ENCODE measurements at regions of chr3 and their contacts with region 1.

Region 1: GRCh38 chr3:39126532-39127071 is 19.1 kb downstream of the TTC21A start:
- DNase-seq: peak in 1 of 2 experiments; percentile 72
- ATAC-seq: peak; percentile 73 to 88
- H3K4me3 ChIP-seq: no peak overlapping the region
- H3K27ac ChIP-seq: peak overlapping the region in 1 of 2 experiments; percentile 27; a peak in 1 of 6 replicates
- H3K4me1 ChIP-seq: peaks cover 18% of the 10 kb centered on the region
- CTCF ChIP-seq: peak; percentile 64
- EP300 ChIP-seq: no peak
- POLR2A ChIP-seq: no peak
- RAD21 ChIP-seq: peak; percentile 78 to 92

Region 2: GRCh38 chr3:39166134-39166731 is 39.6 kb after region 1 on chr3:
- CTCF ChIA-PET with region 1: interaction called, 29 read pairs
- POLR2A ChIA-PET with region 1: no interaction called
- DNase-seq: peak in 1 of 2 experiments; percentile 55
- ATAC-seq: peak; percentile 75 to 85; a peak in 5 of 6 replicates
- H3K4me3 ChIP-seq: no peak overlapping the region
- H3K27ac ChIP-seq: peak overlapping the region; percentile 14 to 32; a peak in 4 of 6 replicates
- H3K4me1 ChIP-seq: peaks cover 25% of the 10 kb centered on the region; the same call in 2 of the 3 replicates
- CTCF ChIP-seq: no peak
- EP300 ChIP-seq: no peak
- POLR2A ChIP-seq: no peak
- RAD21 ChIP-seq: no peak

Region 3: DNA sequence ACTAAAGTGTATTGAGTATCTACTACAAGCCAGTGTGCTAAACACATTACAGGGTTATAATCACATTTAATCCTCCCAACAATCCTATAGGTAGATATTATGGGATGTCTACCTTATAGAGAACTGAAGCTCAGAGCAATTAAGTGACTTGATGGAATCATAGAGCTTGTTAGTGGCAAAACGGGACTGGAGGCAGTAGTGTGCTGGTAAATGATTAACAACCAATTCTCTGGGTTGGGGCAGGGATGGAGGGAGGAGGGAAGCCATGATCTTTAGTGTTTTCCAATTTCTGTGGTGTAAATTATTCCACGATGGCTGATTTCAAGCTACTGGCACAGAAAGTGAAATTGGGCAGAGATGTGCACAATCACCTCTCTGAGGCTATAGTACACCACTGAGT is 45.3 kb after region 1 on chr3:
- CTCF ChIA-PET with region 1: interaction called, 32 read pairs
- POLR2A ChIA-PET with region 1: no interaction called
- DNase-seq: no peak
- ATAC-seq: no peak
- H3K4me3 ChIP-seq: no peak overlapping the region
- H3K27ac ChIP-seq: no peak overlapping the region
- H3K4me1 ChIP-seq: peaks cover 14% of the 10 kb centered on the region
- CTCF ChIP-seq: no peak
- EP300 ChIP-seq: no peak
- POLR2A ChIP-seq: no peak
- RAD21 ChIP-seq: no peak

Region 4: DNA sequence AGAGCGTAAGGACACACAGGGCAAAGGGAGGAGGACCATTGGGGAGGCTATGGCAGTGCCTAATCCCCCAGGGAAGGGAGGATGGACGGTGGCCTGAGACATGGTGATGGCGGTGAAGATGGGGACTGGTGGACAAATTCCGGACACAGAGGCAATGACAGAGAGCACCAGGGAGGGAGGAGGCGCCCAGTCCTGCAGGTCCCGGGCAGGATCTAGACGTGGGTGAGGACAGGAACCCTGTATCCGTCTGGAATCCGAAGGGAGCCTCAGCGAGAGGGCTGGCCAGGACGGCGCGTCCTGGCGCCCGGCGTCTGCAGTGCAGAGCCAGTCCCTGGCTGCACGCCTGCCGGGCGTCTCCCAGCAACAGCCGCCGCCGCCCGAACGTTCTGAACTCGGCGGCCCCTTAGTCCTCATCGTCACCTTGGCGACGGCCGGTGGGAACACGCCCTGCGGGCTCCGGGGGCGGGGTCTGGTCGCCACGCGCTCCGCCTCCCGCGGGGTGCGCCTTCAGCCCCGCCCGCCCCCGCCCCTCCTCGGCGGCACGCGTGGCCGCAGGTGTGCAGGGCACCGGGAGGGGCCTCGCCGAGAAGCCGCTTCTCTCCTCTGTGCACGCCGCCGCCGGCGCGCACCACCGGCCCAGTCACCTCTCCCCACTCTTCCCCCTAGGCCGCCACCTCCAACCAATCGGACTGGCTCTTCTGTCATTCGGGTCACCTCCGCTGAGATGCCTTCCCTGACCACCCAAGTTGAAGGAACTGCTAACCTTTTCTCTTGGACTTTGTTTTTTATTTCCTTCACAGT is 54.1 kb after region 1 on chr3:
- CTCF ChIA-PET with region 1: interaction called, 33 read pairs
- POLR2A ChIA-PET with region 1: no interaction called
- DNase-seq: peak; percentile 76
- ATAC-seq: peak; percentile 77 to 86
- H3K4me3 ChIP-seq: peak overlapping the region; percentile 42
- H3K27ac ChIP-seq: peak overlapping the region; percentile 71 to 74
- H3K4me1 ChIP-seq: peaks cover 29% of the 10 kb centered on the region
- CTCF ChIP-seq: no peak
- EP300 ChIP-seq: no peak
- POLR2A ChIP-seq: no peak
- RAD21 ChIP-seq: 0 out of 5 replicates have a peak, but pooled peaks of 1 of the 2 experiments have one; percentile 7

Region 5: DNA sequence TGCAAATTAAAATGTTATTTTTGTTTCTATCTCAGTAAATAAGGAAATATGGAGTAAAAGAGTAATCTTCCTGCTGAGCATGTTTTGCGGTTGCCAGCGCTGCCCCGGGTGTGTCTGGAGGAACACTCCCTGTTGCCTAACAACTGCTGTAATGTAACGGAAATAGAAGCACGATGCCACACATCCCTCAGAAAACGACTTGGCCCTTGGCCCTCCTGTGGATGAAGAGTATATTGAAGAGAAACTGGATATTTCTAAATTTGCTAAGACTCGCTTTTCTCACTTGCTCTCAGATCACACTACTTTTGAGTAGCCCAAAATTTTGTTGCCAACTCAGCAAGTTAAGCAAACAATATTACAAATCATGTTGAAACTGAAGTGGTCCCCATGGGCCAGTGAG is 134.4 kb after region 1 on chr3:
- CTCF ChIA-PET with region 1: interaction called, 14 read pairs
- POLR2A ChIA-PET with region 1: no interaction called
- DNase-seq: peak; percentile 75 to 89
- ATAC-seq: peak; percentile 94 to 96
- H3K4me3 ChIP-seq: no peak overlapping the region
- H3K27ac ChIP-seq: no peak overlapping the region
- H3K4me1 ChIP-seq: peaks cover 10% of the 10 kb centered on the region; the same call in 2 of the 3 replicates
- CTCF ChIP-seq: peak; percentile 35; the same call in 1 of the 3 replicates
- EP300 ChIP-seq: no peak
- POLR2A ChIP-seq: no peak
- RAD21 ChIP-seq: peak; percentile 19 to 40; a peak in 2 of 5 replicates

Region 6: DNA sequence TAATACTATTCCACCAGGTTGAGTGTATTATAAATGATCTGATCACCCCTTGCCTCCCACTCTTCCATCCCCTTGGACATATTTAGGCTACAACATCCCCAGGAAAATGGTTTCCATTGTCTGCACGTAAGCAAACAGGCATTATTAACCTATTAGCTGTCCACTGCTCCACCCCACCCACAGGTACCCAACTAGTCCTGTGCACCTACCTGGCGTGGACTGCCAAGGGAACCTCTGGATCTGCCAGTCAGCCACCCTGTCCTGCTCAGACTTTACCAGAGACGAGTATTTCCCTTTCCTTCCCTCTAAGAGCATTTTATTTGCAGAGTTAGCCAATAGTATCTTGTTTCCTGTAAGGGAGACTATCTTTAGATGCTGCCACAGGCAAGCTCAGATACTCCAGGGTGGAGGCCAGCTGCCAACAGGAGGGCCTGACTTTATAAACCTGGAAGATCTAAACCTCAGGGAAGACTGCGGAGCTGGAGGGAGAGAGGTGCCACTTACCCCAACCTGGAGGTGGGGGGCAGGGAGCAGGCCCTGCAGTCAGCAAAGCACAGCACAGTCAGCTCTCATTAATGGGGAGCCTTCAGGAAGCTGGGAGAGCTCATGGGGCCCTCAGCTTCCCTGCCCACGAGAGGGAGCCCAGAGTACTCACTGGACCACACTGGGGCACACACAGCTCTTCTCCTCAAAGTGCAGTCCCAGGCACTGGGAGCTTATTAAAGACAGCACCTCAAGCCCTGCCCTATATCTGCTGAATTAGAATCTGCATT is 153.3 kb after region 1 on chr3 and contains the start of gene CX3CR1:
- CTCF ChIA-PET with region 1: interaction called, 383 read pairs
- POLR2A ChIA-PET with region 1: no interaction called
- DNase-seq: no peak
- ATAC-seq: peak; percentile 58 to 69; a peak in 5 of 6 replicates
- H3K4me3 ChIP-seq: no peak within 1 kb of the TSS
- H3K27ac ChIP-seq: no peak within 1 kb of the TSS
- H3K4me1 ChIP-seq: no peaks in the 10 kb centered on the region
- CTCF ChIP-seq: no peak
- EP300 ChIP-seq: no peak
- POLR2A ChIP-seq: no peak
- RAD21 ChIP-seq: no peak
- polyA plus RNA-seq, gene CX3CR1: 0.14 and 0.21 TPM in 2 replicates

Measured in A549 (cell line).